ENCODE measurements at regions of chr5 and their contacts with region 1.

Region 1: GRCh38 chr5:25441810-25442209 is 797.0 kb upstream of the CDH10 start:
- DNase-seq: no peak
- ATAC-seq: no peak
- H3K4me3 ChIP-seq: no peak overlapping the region
- H3K27ac ChIP-seq: no peak overlapping the region
- H3K4me1 ChIP-seq: no peaks in the 10 kb centered on the region
- H3K27me3 ChIP-seq: no peaks in the 10 kb centered on the region
- CTCF ChIP-seq: no peak

Region 2: DNA sequence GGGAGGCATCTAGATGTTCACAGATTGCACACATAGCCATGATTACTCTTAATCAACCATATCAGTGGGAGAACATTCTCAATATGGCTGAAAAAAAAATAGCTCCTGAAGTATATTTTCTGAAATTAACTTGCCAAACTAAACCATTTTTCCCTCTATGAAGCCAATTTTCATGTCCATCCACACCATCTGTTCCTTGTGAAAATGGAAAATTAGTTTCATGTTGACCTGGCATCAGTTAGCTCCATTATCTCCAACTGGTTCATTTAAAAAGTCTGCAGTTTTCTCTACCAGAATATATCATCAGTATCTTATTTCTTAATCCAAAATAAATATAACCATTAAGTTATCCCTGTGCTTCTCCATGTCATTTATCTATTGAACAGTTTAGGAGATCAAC is 658.2 kb before region 1 on chr5:
- intact Hi-C with region 1: no loop called
- DNase-seq: no peak
- ATAC-seq: no peak
- H3K4me3 ChIP-seq: no peak overlapping the region
- H3K27ac ChIP-seq: no peak overlapping the region
- H3K4me1 ChIP-seq: no peaks in the 10 kb centered on the region
- H3K27me3 ChIP-seq: no peaks in the 10 kb centered on the region
- CTCF ChIP-seq: no peak

Region 3: DNA sequence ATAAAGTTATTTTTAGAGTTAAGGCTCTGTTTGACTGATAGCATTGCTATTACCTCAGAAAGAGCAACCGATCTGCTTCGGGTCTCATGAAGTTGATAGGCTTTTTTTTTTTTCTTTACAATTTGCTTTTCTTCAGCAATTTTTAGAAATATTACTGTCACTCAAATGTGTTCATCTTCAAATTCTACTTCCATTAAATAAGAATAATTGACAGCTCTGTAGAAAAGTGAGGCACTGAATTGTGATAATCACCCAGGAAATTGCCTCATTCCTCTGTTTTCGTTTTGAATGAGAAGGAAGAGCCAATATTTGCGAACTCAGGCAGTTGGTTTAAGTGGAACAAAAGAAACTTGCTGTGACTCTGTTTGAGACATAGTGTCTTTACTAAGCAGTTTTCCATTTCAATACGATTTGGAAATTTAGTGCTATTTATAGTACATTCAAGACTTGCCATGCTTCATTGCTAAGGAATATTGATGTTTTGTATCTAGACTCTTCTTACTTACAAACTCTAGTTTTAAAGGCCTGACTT is 96.5 kb before region 1 on chr5:
- intact Hi-C with region 1: no loop called
- DNase-seq: no peak
- ATAC-seq: no peak
- H3K4me3 ChIP-seq: no peak overlapping the region
- H3K27ac ChIP-seq: no peak overlapping the region
- H3K4me1 ChIP-seq: no peaks in the 10 kb centered on the region
- H3K27me3 ChIP-seq: no peaks in the 10 kb centered on the region
- CTCF ChIP-seq: no peak

Region 4: DNA sequence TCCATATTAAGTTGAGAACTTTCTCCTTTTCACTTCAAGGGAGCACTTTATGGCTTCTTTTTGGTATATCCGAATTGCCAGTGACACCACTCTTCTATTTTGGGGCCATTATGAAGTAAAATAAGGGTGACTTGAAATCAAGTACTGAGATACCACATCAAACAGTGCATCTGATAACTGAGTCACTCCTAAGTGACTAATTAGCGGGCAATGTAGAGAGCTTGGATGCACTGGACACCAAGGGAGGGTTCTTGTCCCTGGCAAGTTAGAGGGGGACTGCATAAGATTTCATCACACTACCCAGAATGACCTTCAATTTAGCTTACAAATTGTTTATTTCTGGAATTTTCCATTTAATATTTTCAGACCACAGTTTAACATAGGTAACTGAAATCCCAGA is 16.8 kb after region 1 on chr5:
- intact Hi-C with region 1: loop called in 1 of 10 experiments (anchors 2 kb)
- DNase-seq: no peak
- ATAC-seq: no peak
- H3K4me3 ChIP-seq: no peak overlapping the region
- H3K27ac ChIP-seq: no peak overlapping the region
- H3K4me1 ChIP-seq: no peaks in the 10 kb centered on the region
- H3K27me3 ChIP-seq: no peaks in the 10 kb centered on the region
- CTCF ChIP-seq: no peak

Region 5: DNA sequence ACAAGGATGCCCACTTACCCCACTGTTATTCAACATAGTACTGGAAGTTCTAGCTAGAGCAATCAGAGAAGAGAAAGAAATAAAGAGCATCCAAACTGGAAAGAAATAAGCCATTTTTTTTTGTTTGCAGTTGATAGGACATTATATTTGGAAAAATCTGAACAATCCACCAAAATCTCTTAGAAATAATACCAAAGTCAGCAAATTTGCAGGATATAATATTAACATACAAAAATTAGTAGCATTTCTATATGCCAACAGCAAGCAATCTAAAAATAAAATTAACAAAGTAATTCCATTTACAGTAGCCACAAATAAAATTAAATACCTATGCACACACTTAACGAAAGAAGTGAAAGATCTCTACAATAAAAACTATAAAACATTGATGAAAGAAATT is 997.3 kb after region 1 on chr5:
- intact Hi-C with region 1: no loop called
- DNase-seq: no peak
- ATAC-seq: no peak
- H3K4me3 ChIP-seq: no peak overlapping the region
- H3K27ac ChIP-seq: no peak overlapping the region
- H3K4me1 ChIP-seq: no peaks in the 10 kb centered on the region
- H3K27me3 ChIP-seq: no peaks in the 10 kb centered on the region
- CTCF ChIP-seq: no peak

Measured in heart right ventricle (tissue), 16 donors.